Heart left ventricle (tissue), 16 donors: ENCODE measurements at regions of chr1 and their contacts with region 1.

Region 1: GRCh38 chr1:12420171-12420570 is 190.3 kb downstream of the VPS13D start:
- DNase-seq: no peak
- ATAC-seq: no peak
- H3K4me3 ChIP-seq: no peak overlapping the region
- H3K27ac ChIP-seq: no peak overlapping the region
- H3K4me1 ChIP-seq: peaks cover 4 to 51% (median 17%) of the 10 kb centered on the region in 12 donors
- H3K27me3 ChIP-seq: no peaks in the 10 kb centered on the region
- CTCF ChIP-seq: no peak
- POLR2A ChIP-seq: no peak

Region 2: GRCh38 chr1:11948822-11949458 is 471.2 kb before region 1 on chr1:
- intact Hi-C with region 1: no loop called
- DNase-seq: no peak
- ATAC-seq: no peak
- H3K4me3 ChIP-seq: no peak overlapping the region
- H3K27ac ChIP-seq: no peak overlapping the region
- H3K4me1 ChIP-seq: peaks cover 0 to 11% (median under 1%) of the 10 kb centered on the region in 12 donors
- H3K27me3 ChIP-seq: no peaks in the 10 kb centered on the region
- CTCF ChIP-seq: no peak
- POLR2A ChIP-seq: no peak

Region 3: DNA sequence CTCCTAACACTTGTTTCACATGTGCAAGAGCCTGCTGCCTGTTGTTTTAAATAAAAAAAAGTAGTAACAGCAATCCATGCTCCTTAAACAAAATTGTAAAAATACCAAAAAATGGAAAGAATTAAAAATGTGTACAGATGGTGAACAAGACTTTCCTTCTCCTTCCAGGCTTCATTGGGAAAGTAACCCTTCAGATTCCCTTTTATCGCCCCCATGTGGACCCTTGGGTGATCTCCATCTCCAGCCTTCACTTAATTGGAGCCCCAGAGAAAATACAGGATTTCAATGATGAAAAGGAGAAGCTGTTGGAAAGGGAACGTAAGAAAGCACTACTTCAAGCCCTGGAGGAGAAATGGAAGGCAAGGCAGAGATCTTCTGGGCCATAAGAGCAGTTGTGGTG is 176.1 kb before region 1 on chr1:
- intact Hi-C with region 1: no loop called
- DNase-seq: no peak
- ATAC-seq: no peak
- H3K4me3 ChIP-seq: no peak overlapping the region
- H3K27ac ChIP-seq: no peak overlapping the region
- H3K4me1 ChIP-seq: no peaks in the 10 kb centered on the region
- H3K27me3 ChIP-seq: no peaks in the 10 kb centered on the region
- CTCF ChIP-seq: peak in 8 of 12 donors; percentile 16 to 43 (median 28)
- POLR2A ChIP-seq: no peak

Region 4: GRCh38 chr1:12344596-12345349 is 75.4 kb before region 1 on chr1:
- intact Hi-C with region 1: no loop called
- DNase-seq: peak in 3 of 5 donors; percentile 24 to 41 (median 38)
- ATAC-seq: peak; percentile 38 to 64 (median 50)
- H3K4me3 ChIP-seq: peak overlapping the region; percentile 7 to 48 (median 36)
- H3K27ac ChIP-seq: peak overlapping the region; percentile 15 to 87 (median 72)
- H3K4me1 ChIP-seq: peaks cover 11 to 88% (median 56%) of the 10 kb centered on the region in 12 donors
- H3K27me3 ChIP-seq: no peaks in the 10 kb centered on the region
- CTCF ChIP-seq: no peak
- POLR2A ChIP-seq: no peak

Region 5: GRCh38 chr1:12407050-12407961 is 12.9 kb before region 1 on chr1:
- intact Hi-C with region 1: loop called in 1 of 10 experiments (anchors 2 kb)
- DNase-seq: peak in 2 of 5 donors; percentile 27 to 32
- ATAC-seq: peak; percentile 62 to 82 (median 70)
- H3K4me3 ChIP-seq: no peak overlapping the region
- H3K27ac ChIP-seq: peak overlapping the region; percentile 31 to 75 (median 60)
- H3K4me1 ChIP-seq: peaks cover 6 to 53% (median 36%) of the 10 kb centered on the region in 12 donors
- H3K27me3 ChIP-seq: no peaks in the 10 kb centered on the region
- CTCF ChIP-seq: peak; percentile 7 to 69 (median 50)
- POLR2A ChIP-seq: no peak